ENCODE measurements at regions of chr6 and their contacts with region 1.

Region 1: DNA sequence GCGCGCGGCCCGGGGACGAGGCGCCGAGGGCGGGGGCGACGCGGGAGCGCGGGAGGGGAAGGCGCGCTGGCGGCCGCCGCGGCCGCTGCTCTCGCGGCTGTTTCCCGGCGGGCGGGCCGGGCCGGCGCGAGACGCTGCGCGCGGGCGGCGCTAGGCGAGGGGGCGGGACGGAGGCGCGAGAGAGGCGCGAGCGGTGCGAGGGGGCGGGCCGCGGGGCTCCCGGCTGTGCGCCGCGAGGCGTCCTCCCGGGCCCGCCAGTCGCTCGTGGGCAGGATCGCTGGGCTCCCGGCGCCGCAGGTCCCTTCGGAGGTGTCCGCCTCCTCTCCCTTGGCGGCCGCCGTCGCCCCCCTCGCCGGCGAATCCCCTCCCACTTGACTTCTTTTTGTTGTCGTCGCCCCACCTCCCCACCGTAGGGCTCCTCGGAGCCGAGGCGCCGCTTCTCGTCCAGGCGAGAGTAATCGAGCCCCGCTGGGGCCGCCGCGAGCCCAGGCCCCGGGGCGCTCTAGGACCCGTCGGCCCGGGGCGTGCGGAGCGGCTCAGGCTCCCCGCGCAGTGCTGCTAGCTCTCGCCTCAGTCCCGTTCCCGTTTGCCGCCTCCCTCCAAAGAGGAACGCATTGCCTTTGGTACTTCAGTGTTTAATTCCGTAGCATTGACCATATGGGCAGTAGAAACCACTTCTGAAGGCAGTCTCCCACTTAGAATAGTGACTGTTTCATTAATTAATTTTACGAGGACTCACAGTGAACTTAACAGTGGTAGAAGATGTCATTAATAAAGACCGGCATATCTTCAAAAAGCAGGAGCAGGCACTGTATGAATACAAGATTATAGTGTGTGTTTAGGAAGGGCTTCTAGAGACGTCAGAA is at the start of gene RANBP9:
- DNase-seq: peak; percentile 86
- H3K4me3 Mint-ChIP-seq: peak within 1 kb of the TSS; percentile 87
- H3K27ac Mint-ChIP-seq: peak within 1 kb of the TSS; percentile 96
- H3K4me1 Mint-ChIP-seq: peaks cover 54% of the 10 kb centered on the region
- H3K27me3 Mint-ChIP-seq: no peaks in the 10 kb centered on the region
- total RNA-seq, gene RANBP9: 61.2 to 62.9 TPM

Region 2: GRCh38 chr6:13328076-13328874 is 383.7 kb before region 1 on chr6 and contains the start of gene TBC1D7:
- CTCF ChIA-PET with region 1: no interaction called
- intact Hi-C with region 1: loop called (anchors 2 kb)
- DNase-seq: peak; percentile 94
- H3K4me3 Mint-ChIP-seq: peak within 1 kb of the TSS; percentile 95
- H3K27ac Mint-ChIP-seq: peak within 1 kb of the TSS; percentile 93
- H3K4me1 Mint-ChIP-seq: peaks cover 18% of the 10 kb centered on the region
- H3K27me3 Mint-ChIP-seq: no peaks in the 10 kb centered on the region
- total RNA-seq, gene TBC1D7: 25.4 to 27.1 TPM

Region 3: DNA sequence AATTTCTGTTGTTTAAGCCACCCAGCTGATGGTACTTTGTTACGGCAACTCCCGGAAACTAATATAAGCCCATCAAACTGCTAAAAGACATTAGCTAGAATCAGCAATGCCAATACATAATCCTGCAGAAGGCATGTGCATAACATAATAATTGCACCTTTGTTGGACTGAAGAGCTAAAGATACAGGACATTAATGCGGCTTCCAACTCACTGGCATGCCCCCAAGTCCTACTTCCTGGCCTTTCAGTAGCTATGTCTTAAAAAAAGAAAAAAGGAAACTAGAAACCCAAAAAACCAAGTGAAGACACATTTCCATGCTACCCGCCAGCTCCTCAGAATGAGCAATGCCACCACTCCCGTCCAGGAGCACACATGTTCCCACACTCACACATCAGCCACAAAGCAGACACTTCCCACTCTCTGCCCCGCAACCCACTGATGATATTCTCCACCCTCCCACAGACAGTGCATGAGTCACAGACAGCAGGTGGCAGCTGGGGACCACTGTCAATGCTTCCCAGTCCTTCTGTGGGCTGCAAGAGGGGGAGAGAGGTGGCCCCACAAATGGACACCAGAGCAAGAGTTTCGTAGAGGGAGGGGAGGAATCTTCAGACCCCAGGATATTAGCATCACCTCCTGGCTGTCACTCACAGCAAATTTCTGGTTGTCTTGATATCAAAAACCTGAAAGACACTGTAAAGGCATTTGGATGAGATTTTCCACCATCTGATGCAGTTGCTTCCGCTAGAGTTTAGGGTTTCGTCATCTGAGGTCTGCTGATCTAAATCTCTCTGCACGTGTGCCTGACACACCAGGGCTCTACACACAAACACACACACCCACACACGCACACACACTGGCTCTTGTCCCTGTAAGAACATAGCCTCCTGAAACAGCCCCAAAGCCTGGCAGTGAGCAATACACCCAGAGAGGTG is 257.4 kb before region 1 on chr6:
- CTCF ChIA-PET with region 1: no interaction called
- intact Hi-C with region 1: loop called (anchors 5 kb)
- DNase-seq: peak; percentile 86
- H3K4me3 Mint-ChIP-seq: peak overlapping the region; percentile 46
- H3K27ac Mint-ChIP-seq: peak overlapping the region; percentile 93
- H3K4me1 Mint-ChIP-seq: peaks cover 45% of the 10 kb centered on the region
- H3K27me3 Mint-ChIP-seq: no peaks in the 10 kb centered on the region

Region 4: DNA sequence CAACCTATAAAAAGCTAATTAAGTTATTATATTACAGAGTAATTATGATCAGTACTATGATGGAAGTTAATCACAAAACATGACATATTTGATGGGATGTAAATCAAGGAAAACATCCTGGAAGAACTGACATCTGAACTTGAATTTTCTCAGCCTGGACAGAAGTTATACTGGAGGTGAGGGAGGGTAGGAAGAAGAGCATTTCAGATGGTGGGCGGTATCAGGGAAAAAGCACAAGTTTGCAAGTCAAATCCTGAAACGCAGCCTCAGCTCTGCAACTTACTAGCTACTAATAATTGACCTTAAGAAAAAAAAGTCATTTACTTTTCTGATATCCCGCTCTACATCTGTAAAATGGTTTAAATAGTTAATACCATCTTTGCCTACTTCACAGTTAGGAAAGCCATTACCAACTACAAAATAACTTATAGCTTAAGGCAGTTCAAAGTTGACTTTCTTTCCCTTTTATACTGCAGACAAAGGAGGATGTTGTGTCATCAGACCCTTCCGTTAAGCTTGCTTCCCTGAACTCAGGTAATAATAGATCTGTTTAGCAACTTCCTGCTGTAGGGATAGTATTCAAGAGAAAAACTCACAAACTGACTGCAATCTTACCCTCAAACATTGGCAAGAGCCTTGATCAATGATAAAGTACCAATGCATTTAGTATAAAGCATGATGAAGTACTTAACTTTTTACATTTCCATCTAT is 75.9 kb before region 1 on chr6:
- CTCF ChIA-PET with region 1: interaction called, 4 read pairs
- intact Hi-C with region 1: loop called (anchors 5 kb)
- DNase-seq: no peak
- H3K4me3 Mint-ChIP-seq: peak overlapping the region; percentile 2
- H3K27ac Mint-ChIP-seq: peak overlapping the region; percentile 84
- H3K4me1 Mint-ChIP-seq: peaks cover 60% of the 10 kb centered on the region
- H3K27me3 Mint-ChIP-seq: no peaks in the 10 kb centered on the region

Region 5: DNA sequence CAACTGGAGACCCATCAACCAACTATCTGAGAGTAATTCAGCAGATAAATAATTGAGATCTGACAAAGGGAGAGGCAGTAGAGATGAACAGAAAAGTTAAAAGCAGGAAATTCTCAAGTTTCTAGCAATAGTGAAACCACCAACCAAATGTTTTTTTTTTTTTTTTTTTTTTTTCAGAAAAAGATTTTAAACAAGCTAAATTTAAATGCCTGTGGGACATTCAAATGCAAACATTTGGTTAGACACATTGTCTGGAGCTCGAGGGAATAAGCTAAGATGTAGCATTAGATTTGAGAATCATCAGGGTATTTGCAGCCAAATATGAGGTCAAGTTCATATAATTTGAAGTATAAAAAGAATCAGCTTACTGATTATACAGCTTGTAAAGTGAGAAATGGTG is 16.7 kb before region 1 on chr6:
- CTCF ChIA-PET with region 1: interaction called, 3 read pairs
- intact Hi-C with region 1: loop called (anchors 2 kb)
- DNase-seq: no peak
- H3K4me3 Mint-ChIP-seq: no peak overlapping the region
- H3K27ac Mint-ChIP-seq: peak overlapping the region; percentile 65
- H3K4me1 Mint-ChIP-seq: peaks cover 73% of the 10 kb centered on the region
- H3K27me3 Mint-ChIP-seq: no peaks in the 10 kb centered on the region

Region 6: DNA sequence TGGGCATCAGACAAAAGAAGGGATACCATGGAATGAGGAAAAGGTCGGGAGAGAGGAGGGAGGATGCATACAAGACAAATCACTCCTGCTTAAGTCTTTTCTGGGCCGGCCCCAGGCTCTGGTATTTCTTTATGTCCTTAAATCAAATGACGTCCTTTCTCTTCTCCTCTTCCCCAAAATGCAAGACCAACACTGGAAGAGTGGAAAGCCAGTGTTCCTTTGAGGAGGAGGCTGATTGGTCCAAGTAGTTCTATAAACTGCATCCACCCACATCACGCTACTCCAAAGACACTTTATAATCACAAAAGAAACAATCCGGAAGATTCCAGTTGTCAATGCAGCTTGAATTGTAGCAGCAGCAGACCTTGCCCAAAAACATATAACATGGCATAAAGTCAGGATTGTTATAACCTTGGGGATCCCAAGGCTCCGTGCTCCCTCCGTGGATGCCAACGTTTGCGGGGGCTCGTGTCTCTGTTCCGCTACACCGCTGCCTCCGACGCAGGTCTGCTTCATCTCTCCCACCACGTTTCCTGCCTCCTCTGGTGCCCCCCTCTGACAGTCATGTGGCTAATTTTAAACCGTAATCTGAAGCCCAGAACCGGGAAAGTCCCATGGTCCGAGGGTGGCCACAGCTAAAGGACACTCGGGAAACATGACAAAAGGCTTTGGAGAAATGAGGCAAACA is 55.3 kb after region 1 on chr6:
- CTCF ChIA-PET with region 1: interaction called, 6 read pairs
- intact Hi-C with region 1: loop called (anchors 1 kb)
- DNase-seq: peak; percentile 71
- H3K4me3 Mint-ChIP-seq: peak overlapping the region; percentile 78
- H3K27ac Mint-ChIP-seq: no peak overlapping the region
- H3K4me1 Mint-ChIP-seq: peaks cover 43% of the 10 kb centered on the region
- H3K27me3 Mint-ChIP-seq: peaks cover 1% of the 10 kb centered on the region

Region 7: DNA sequence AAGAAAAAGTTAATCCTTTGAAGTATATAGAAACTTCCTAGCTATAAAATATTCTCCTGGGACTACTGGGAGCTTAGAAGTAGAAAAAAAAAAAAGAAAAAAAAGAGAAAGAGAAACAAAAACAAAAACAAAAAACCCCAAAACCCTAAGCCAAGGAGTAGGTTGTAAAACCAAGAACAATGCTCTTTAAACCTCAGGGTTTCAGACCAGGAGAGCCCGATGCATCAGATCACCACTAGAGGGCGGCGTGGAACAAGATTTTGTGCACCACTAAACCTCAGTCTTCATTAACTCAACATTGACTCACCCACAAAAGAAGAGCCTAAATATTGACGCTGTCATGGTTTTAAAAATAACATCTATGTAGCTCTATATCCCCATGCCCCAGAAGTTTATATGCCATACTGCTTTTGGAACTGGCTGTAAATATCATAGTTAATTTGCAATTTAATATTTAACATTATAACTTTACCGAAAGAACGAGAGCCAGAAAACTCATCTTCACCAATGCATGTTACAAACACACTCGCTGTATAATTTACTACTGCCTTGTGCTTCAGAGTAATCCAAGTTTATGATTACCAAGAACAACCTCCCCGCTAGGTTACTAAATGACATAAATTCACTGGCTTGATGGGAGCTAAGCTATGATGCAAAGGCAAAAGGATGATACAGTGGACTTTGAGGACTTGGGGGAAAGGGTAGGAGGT is 83.2 kb after region 1 on chr6:
- CTCF ChIA-PET with region 1: no interaction called
- intact Hi-C with region 1: loop called (anchors 2 kb)
- DNase-seq: peak; percentile 97
- H3K4me3 Mint-ChIP-seq: no peak overlapping the region
- H3K27ac Mint-ChIP-seq: no peak overlapping the region
- H3K4me1 Mint-ChIP-seq: peaks cover 14% of the 10 kb centered on the region
- H3K27me3 Mint-ChIP-seq: no peaks in the 10 kb centered on the region